ENCODE measurements at regions of chr13 and their contacts with region 1.

Region 1: GRCh38 chr13:31044377-31045285 is 112.2 kb downstream of the TEX26 start:
- DNase-seq: peak; percentile 94

Region 2: DNA sequence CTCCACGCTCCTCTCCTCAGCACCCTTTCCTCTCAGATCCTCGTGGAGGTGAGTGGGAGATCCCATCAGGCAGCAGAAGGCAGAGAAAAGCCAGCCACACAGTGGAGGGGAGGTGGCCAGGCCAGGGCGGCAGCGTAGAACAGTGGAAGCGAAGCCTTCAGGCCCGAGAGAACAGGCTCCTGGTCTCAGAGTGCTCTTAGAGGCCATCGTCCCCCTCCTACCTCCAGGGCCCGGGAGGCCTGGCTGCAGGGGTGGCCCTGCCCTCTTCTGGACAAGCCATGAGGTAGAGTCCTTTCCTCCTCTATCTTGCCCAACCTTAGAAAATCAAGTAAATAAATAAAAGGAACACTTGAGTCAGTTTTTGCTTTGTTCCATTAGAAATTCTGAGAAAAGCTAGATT is 939.2 kb before region 1 on chr13:
- intact Hi-C with region 1: no loop called
- DNase-seq: no peak

Region 3: DNA sequence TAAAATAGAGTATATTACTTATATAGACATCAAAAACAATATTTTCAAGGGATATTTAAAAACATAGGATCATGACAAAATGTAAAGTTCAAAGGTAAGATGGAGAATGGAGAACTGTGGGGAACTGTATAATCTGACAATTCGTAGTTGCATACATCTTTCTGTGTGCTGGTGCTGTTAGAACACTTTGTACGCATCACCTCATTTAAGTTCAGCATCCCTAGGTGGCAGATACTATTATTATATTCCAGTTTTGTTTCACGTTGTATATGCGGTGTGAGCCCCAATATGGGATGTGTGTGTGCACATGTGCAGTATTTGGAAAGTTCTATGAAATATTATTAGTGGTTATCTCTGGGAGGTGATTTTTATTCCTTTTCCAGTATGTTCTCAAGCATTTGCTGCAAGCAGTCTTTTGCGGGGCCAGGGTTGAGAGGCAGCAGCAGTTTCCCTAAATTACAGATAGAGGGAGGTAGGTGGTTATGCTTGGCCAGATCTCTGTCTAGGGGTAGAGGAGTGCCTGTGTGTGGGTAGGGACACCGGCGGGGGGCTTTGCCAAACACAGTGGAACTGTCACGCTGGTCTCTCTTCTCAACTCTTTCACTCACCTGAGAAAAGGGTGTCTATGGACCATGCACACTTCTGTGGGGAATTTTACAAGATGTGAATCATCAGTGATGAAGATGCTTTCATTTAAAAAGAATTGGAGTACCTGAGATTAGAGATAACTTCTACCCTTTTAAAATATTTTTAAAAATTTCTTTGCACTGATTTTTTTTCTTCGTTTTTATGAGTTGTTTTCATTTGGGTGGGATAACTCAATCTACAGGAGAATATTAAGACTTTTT is 364.9 kb before region 1 on chr13:
- intact Hi-C with region 1: loop called in 1 of 2 experiments (anchors 5 kb)
- DNase-seq: no peak

Measured in posterior vena cava (tissue), 2 donors.